CD4-positive, alpha-beta T cell (primary cell): ENCODE measurements at regions of chr12 and their contacts with region 1.

Region 1: GRCh38 chr12:114829833-114830232 is 145.9 kb upstream of the TBX3 start:
- DNase-seq: no peak
- ATAC-seq: no peak
- H3K4me3 ChIP-seq: no peak overlapping the region
- H3K4me3 Mint-ChIP-seq: no peak overlapping the region
- H3K27ac ChIP-seq: no peak overlapping the region
- H3K27ac Mint-ChIP-seq: no peak overlapping the region
- H3K4me1 ChIP-seq: no peaks in the 10 kb centered on the region
- H3K4me1 Mint-ChIP-seq: no peaks in the 10 kb centered on the region
- H3K27me3 ChIP-seq: no peaks in the 10 kb centered on the region
- H3K27me3 Mint-ChIP-seq: no peaks in the 10 kb centered on the region
- CTCF ChIP-seq: no peak

Region 2: DNA sequence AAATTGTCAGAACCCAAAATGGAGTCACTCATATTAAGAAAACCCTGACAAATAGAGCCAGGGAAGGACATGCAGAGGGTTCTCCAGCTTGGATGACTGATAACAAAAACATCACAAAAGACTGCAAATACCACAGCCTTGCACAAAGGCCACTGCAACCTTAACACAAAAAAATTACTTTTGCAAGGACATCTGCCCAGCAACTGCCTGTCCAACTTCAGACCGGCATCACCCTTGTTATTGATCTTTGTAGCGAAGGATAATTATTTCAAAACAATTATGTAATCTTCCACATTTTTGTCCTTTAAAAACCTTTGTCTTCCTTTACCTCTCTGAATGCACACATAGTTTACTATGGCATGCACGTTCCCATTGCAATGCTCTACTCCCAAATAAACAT is 45.3 kb before region 1 on chr12:
- CTCF ChIA-PET with region 1: no interaction called
- POLR2A ChIA-PET with region 1: no interaction called
- intact Hi-C with region 1: no loop called
- DNase-seq: no peak
- ATAC-seq: no peak
- H3K4me3 ChIP-seq: no peak overlapping the region
- H3K4me3 Mint-ChIP-seq: no peak overlapping the region
- H3K27ac ChIP-seq: no peak overlapping the region
- H3K27ac Mint-ChIP-seq: no peak overlapping the region
- H3K4me1 ChIP-seq: no peaks in the 10 kb centered on the region
- H3K4me1 Mint-ChIP-seq: no peaks in the 10 kb centered on the region
- H3K27me3 ChIP-seq: no peaks in the 10 kb centered on the region
- H3K27me3 Mint-ChIP-seq: no peaks in the 10 kb centered on the region
- CTCF ChIP-seq: no peak

Region 3: DNA sequence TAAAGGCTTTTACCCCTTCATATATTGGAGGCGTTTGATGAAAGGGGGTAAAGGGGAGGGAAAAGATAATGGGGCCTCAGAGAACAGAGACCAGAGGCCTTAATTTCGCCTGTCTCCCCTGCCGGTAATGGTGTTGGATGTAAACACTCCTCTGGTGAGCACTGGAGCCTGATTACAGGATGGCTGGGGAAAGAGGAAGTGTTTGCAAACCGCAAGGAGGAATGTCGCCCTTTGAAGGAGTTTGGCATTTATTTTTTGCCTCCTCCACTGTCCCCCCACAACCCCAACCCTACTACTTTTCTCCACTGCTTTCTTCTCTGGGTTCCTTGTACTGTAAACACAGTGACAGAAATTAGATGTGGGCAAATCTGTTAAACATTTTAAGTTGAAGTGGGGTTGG is 66.0 kb after region 1 on chr12:
- CTCF ChIA-PET with region 1: no interaction called
- POLR2A ChIA-PET with region 1: no interaction called
- intact Hi-C with region 1: loop called in 1 of 2 experiments (anchors 2 kb)
- DNase-seq: no peak
- ATAC-seq: no peak
- H3K4me3 ChIP-seq: no peak overlapping the region
- H3K4me3 Mint-ChIP-seq: no peak overlapping the region
- H3K27ac ChIP-seq: no peak overlapping the region
- H3K27ac Mint-ChIP-seq: no peak overlapping the region
- H3K4me1 ChIP-seq: no peaks in the 10 kb centered on the region
- H3K4me1 Mint-ChIP-seq: no peaks in the 10 kb centered on the region
- H3K27me3 ChIP-seq: no peaks in the 10 kb centered on the region
- H3K27me3 Mint-ChIP-seq: no peaks in the 10 kb centered on the region
- CTCF ChIP-seq: no peak

Region 4: GRCh38 chr12:114967151-114967550 is 137.3 kb after region 1 on chr12:
- CTCF ChIA-PET with region 1: no interaction called
- POLR2A ChIA-PET with region 1: no interaction called
- intact Hi-C with region 1: no loop called
- DNase-seq: no peak
- ATAC-seq: no peak
- H3K4me3 ChIP-seq: no peak overlapping the region
- H3K4me3 Mint-ChIP-seq: no peak overlapping the region
- H3K27ac ChIP-seq: no peak overlapping the region
- H3K27ac Mint-ChIP-seq: no peak overlapping the region
- H3K4me1 ChIP-seq: no peaks in the 10 kb centered on the region
- H3K4me1 Mint-ChIP-seq: no peaks in the 10 kb centered on the region
- H3K27me3 ChIP-seq: no peaks in the 10 kb centered on the region
- H3K27me3 Mint-ChIP-seq: no peaks in the 10 kb centered on the region
- CTCF ChIP-seq: no peak